Natural killer cell (primary cell): ENCODE measurements at regions of chr2 and their contacts with region 1.

Region 1: GRCh38 chr2:201257956-201258665 is 2.2 kb upstream of the CASP8 start:
- DNase-seq: peak; percentile 75 to 97
- ATAC-seq: peak; percentile 53 to 83 (median 73)
- H3K4me3 ChIP-seq: peak overlapping the region; percentile 42
- H3K4me3 Mint-ChIP-seq: peak overlapping the region; percentile 94
- H3K27ac ChIP-seq: peak overlapping the region; percentile 98
- H3K27ac Mint-ChIP-seq: peak overlapping the region; percentile 100
- H3K4me1 ChIP-seq: peaks cover 71% of the 10 kb centered on the region
- H3K4me1 Mint-ChIP-seq: peaks cover 66 to 77% of the 10 kb centered on the region in 2 donors
- H3K27me3 ChIP-seq: no peaks in the 10 kb centered on the region
- H3K27me3 Mint-ChIP-seq: no peaks in the 10 kb centered on the region
- CTCF ChIP-seq: no peak

Region 2: GRCh38 chr2:200864176-200864976 is 393.7 kb before region 1 on chr2 and contains the start of gene CLK1:
- intact Hi-C with region 1: loop called (anchors 5 kb)
- DNase-seq: peak; percentile 93 to 98
- ATAC-seq: peak; percentile 76 to 92 (median 82)
- H3K4me3 ChIP-seq: peak within 1 kb of the TSS; percentile 95
- H3K4me3 Mint-ChIP-seq: peak within 1 kb of the TSS; percentile 93
- H3K27ac ChIP-seq: peak within 1 kb of the TSS; percentile 99
- H3K27ac Mint-ChIP-seq: peak within 1 kb of the TSS; percentile 92 to 99
- H3K4me1 ChIP-seq: peaks cover 23% of the 10 kb centered on the region
- H3K4me1 Mint-ChIP-seq: peaks cover 45 to 58% of the 10 kb centered on the region in 2 donors
- H3K27me3 ChIP-seq: no peaks in the 10 kb centered on the region
- H3K27me3 Mint-ChIP-seq: no peaks in the 10 kb centered on the region
- CTCF ChIP-seq: no peak
- total RNA-seq, gene CLK1: 975 to 1,296 (median 1,070) TPM

Region 3: DNA sequence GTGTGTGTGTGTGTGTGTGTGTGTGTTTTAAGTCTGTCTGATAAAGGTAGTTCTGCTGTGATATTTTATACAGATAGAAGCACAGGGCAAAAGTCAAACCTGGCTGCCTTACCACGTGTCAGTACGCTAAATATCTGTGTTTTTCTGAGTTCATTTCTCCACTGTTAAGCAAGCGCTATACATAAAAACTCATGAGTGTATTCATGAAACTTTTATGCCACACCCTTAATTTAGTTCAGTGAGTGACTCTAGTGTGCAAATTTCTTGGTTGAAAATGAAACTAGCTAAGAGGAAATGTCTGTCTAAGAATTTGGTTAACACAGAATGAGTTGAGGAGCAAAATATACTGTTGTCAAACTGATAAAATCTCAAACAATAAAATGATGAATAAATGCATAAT is 64.0 kb before region 1 on chr2:
- intact Hi-C with region 1: loop called (anchors 5 kb)
- DNase-seq: peak in 1 of 2 donors; percentile 49
- ATAC-seq: peak; percentile 72 to 82 (median 75)
- H3K4me3 ChIP-seq: no peak overlapping the region
- H3K4me3 Mint-ChIP-seq: peak overlapping the region; percentile 90
- H3K27ac ChIP-seq: peak overlapping the region; percentile 50
- H3K27ac Mint-ChIP-seq: peak overlapping the region; percentile 97 to 98
- H3K4me1 ChIP-seq: peaks cover 46% of the 10 kb centered on the region
- H3K4me1 Mint-ChIP-seq: peaks cover 70 to 73% of the 10 kb centered on the region in 2 donors
- H3K27me3 ChIP-seq: no peaks in the 10 kb centered on the region
- H3K27me3 Mint-ChIP-seq: no peaks in the 10 kb centered on the region
- CTCF ChIP-seq: no peak

Region 4: GRCh38 chr2:201208563-201209252 is 49.4 kb before region 1 on chr2:
- intact Hi-C with region 1: loop called (anchors 1 kb)
- DNase-seq: no peak
- ATAC-seq: peak in 1 of 3 donors; percentile 23
- H3K4me3 ChIP-seq: no peak overlapping the region
- H3K4me3 Mint-ChIP-seq: no peak overlapping the region
- H3K27ac ChIP-seq: peak overlapping the region; percentile 27
- H3K27ac Mint-ChIP-seq: peak overlapping the region in 1 of 2 donors; percentile 62
- H3K4me1 ChIP-seq: peaks cover 16% of the 10 kb centered on the region
- H3K4me1 Mint-ChIP-seq: peaks cover 30 to 37% of the 10 kb centered on the region in 2 donors
- H3K27me3 ChIP-seq: no peaks in the 10 kb centered on the region
- H3K27me3 Mint-ChIP-seq: no peaks in the 10 kb centered on the region
- CTCF ChIP-seq: no peak

Region 5: GRCh38 chr2:201220102-201220570 is 38.0 kb before region 1 on chr2:
- intact Hi-C with region 1: no loop called
- DNase-seq: peak in 1 of 2 donors; percentile 23
- ATAC-seq: no peak
- H3K4me3 ChIP-seq: no peak overlapping the region
- H3K4me3 Mint-ChIP-seq: no peak overlapping the region
- H3K27ac ChIP-seq: no peak overlapping the region
- H3K27ac Mint-ChIP-seq: peak overlapping the region; percentile 81 to 84
- H3K4me1 ChIP-seq: peaks cover 3% of the 10 kb centered on the region
- H3K4me1 Mint-ChIP-seq: peaks cover 13 to 28% of the 10 kb centered on the region in 2 donors
- H3K27me3 ChIP-seq: no peaks in the 10 kb centered on the region
- H3K27me3 Mint-ChIP-seq: no peaks in the 10 kb centered on the region
- CTCF ChIP-seq: no peak

Region 6: GRCh38 chr2:201307876-201308275 is 49.8 kb after region 1 on chr2:
- intact Hi-C with region 1: no loop called
- DNase-seq: no peak
- ATAC-seq: no peak
- H3K4me3 ChIP-seq: no peak overlapping the region
- H3K4me3 Mint-ChIP-seq: no peak overlapping the region
- H3K27ac ChIP-seq: no peak overlapping the region
- H3K27ac Mint-ChIP-seq: no peak overlapping the region
- H3K4me1 ChIP-seq: no peaks in the 10 kb centered on the region
- H3K4me1 Mint-ChIP-seq: no peaks in the 10 kb centered on the region
- H3K27me3 ChIP-seq: no peaks in the 10 kb centered on the region
- H3K27me3 Mint-ChIP-seq: no peaks in the 10 kb centered on the region
- CTCF ChIP-seq: no peak